PC-9 (cell line): ENCODE measurements at regions of chr20 and their contacts with region 1.

Region 1: GRCh38 chr20:54267510-54268003 is 59.7 kb downstream of the PFDN4 start:
- DNase-seq: peak; percentile 85 to 99
- H3K4me3 ChIP-seq: peak overlapping the region; percentile 37; the same call in 1 of the 2 replicates
- H3K27ac ChIP-seq: peak overlapping the region; percentile 86
- H3K4me1 ChIP-seq: peaks cover 47% of the 10 kb centered on the region
- H3K27me3 ChIP-seq: no peaks in the 10 kb centered on the region
- CTCF ChIP-seq: no peak

Region 2: DNA sequence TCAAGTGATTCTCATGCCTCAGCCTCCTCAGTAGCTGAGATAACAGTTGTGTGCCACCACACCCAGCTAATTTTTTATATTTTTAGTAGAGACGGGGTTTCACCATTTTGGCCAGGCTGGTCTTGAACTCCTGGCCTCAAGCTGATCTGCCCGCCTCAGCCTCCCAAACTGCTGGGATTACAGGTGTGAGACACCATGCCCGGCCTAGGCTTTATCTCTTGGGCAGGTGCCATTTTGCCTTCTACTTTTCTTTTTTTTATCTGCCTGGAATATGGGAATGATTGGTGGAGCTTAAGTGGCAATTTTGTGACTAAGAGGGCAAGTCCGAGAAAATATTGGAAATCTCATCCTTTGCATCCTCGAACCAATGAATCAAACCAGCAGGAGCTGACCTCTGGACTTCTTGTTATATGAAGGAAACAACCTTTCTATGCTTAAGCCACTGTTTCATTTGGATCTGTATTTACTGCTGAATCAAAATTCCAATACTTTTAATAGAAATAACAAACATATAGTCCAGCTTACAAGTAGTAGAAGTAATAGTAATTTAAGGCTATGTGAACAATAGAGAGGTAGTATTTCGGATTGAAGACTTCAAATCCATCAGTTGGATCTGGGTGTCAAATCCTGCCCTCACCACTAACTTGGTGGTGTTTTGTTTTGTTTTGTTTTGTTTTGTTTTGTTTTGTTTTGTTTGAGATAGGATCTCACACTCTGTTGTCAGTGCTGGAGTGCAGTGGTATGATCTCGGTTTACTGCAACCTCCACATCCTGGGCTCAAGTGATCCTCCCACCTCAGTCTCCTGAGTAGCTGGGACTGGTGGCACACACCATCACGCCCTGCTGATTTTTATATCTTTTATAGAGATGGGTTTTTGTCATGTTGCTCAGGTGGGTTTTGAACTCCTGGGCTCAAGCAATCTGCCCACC is 544.8 kb before region 1 on chr20:
- CTCF ChIA-PET with region 1: no interaction called
- POLR2A ChIA-PET with region 1: no interaction called
- intact Hi-C with region 1: no loop called
- DNase-seq: no peak
- H3K4me3 ChIP-seq: no peak overlapping the region
- H3K27ac ChIP-seq: no peak overlapping the region
- H3K4me1 ChIP-seq: no peaks in the 10 kb centered on the region
- H3K27me3 ChIP-seq: no peaks in the 10 kb centered on the region
- CTCF ChIP-seq: no peak

Region 3: DNA sequence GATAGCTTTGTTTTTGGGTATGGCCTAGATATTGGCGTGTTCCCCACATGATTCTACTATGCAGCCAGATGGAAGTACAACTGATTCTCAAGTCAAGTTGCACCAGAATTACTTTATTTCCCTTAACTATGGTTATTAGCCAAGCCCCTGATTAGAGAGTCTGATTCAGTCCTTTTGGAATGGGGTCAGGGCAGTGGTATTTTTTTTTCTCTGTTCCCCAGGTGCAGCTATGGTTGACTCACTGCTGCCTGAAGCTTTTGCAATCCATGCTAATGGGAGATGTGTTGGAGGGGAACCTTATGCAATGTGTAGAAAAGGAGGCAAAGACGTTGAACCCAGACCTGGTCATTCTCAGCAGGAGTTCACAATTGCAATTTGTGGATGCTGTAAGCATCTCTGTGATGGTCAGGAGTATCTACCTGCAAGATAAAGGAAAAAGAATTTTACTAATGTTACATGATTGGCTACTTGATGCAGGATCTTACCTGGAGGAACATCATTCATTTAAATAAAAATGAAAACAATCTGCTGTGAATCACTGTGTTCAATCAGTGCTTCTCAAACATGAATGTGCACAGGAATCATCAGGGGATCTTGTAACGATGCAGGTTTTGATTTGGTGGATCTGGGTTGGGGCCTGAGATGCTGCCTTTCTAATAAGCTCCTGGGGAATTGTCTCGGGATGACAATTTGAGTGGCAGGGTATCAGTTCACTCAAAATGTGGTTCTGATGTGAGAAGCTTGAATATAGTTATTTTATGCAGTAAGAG is 10.3 kb before region 1 on chr20:
- CTCF ChIA-PET with region 1: no interaction called
- POLR2A ChIA-PET with region 1: no interaction called
- intact Hi-C with region 1: loop called (anchors 1 kb)
- DNase-seq: peak; percentile 72 to 97
- H3K4me3 ChIP-seq: no peak overlapping the region
- H3K27ac ChIP-seq: peak overlapping the region; percentile 79
- H3K4me1 ChIP-seq: peaks cover 41% of the 10 kb centered on the region
- H3K27me3 ChIP-seq: no peaks in the 10 kb centered on the region
- CTCF ChIP-seq: no peak

Region 4: GRCh38 chr20:54308804-54309203 is 41.2 kb after region 1 on chr20:
- CTCF ChIA-PET with region 1: no interaction called
- POLR2A ChIA-PET with region 1: no interaction called
- intact Hi-C with region 1: no loop called
- DNase-seq: no peak
- H3K4me3 ChIP-seq: no peak overlapping the region
- H3K27ac ChIP-seq: no peak overlapping the region
- H3K4me1 ChIP-seq: no peaks in the 10 kb centered on the region
- H3K27me3 ChIP-seq: no peaks in the 10 kb centered on the region
- CTCF ChIP-seq: no peak

Region 5: DNA sequence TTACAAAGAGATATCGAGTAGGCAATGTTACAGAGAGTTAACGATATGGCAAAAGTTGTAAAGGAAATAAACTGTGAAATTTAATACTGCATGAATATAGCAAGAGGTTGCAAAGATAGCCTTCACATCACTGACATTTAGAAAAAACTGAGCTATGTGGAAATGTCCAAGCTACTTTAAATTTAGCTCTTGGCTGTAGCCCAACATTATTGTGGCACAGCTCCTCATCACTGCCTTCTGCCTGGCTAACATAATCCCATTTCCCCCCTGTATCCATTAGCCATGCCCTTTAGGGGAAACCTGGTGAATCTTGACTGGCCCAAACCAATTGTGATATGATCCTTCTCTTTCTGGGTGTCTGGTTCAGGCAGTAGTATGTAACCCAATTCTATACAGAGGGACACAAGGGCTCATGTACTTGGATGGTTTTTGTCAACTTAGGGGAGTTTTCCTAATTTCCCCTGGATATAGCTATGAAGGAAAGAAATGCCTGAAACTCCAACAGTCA is 55.7 kb after region 1 on chr20:
- CTCF ChIA-PET with region 1: no interaction called
- POLR2A ChIA-PET with region 1: no interaction called
- intact Hi-C with region 1: no loop called
- DNase-seq: no peak
- H3K4me3 ChIP-seq: no peak overlapping the region
- H3K27ac ChIP-seq: no peak overlapping the region
- H3K4me1 ChIP-seq: no peaks in the 10 kb centered on the region
- H3K27me3 ChIP-seq: no peaks in the 10 kb centered on the region
- CTCF ChIP-seq: no peak

Region 6: GRCh38 chr20:54345301-54345724 is 77.8 kb after region 1 on chr20:
- CTCF ChIA-PET with region 1: no interaction called
- POLR2A ChIA-PET with region 1: no interaction called
- intact Hi-C with region 1: loop called (anchors 1 kb)
- DNase-seq: peak; percentile 15 to 79
- H3K4me3 ChIP-seq: peak overlapping the region; percentile 20; the same call in 1 of the 2 replicates
- H3K27ac ChIP-seq: peak overlapping the region; percentile 59
- H3K4me1 ChIP-seq: peaks cover 29% of the 10 kb centered on the region
- H3K27me3 ChIP-seq: no peaks in the 10 kb centered on the region
- CTCF ChIP-seq: no peak